MCF 10A (cell line): ENCODE measurements at regions of chr1 and their contacts with region 1.

Region 1: DNA sequence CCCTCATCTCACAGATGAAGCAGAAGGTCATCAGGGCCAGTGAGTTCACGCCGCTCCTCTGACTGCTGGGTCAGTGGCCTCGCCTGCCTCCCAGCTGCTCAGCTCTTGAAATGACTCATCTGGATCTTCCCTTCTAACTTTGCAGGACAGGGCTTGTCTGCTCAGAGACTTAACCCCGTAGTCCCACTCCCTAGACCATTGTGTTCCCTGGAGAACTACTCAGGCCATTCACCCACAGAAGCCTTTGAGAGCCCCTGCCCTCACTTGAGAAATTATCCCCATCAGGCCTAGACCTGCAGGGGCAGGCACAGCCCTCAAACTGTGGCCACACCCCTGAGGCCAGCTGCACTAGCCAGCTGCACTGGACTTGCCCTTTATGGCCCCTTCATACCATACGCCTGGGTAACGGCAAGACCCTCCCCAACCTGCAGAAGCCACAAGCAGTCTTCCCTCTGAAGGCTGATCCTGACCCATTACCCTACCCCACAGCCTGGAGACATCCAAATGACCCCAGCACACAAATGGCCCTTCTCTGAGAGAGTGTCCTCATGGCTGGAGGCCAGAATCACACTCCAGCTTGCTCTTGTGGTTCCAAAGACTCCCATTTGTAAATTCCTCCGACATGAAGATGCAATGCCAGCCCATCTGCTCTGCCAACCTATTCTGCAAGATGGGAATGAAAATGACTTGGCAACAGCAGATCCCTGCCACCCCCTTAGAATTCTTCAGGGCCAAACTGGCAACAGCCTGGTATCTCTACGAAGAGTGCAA is 33.2 kb downstream of the RCSD1 start:
- DNase-seq: peak; percentile 99
- H3K4me3 Mint-ChIP-seq: peak overlapping the region; percentile 51
- H3K27ac Mint-ChIP-seq: peak overlapping the region; percentile 71
- H3K4me1 Mint-ChIP-seq: peaks cover 71% of the 10 kb centered on the region
- H3K27me3 Mint-ChIP-seq: no peaks in the 10 kb centered on the region
- CTCF ChIP-seq: no peak

Region 2: GRCh38 chr1:167563579-167564246 is 99.5 kb before region 1 on chr1:
- CTCF ChIA-PET with region 1: interaction called, 5 read pairs
- POLR2A ChIA-PET with region 1: interaction called, 16 read pairs
- intact Hi-C with region 1: no loop called
- DNase-seq: peak; percentile 79
- H3K4me3 Mint-ChIP-seq: peak overlapping the region; percentile 64
- H3K27ac Mint-ChIP-seq: peak overlapping the region; percentile 85
- H3K4me1 Mint-ChIP-seq: peaks cover 46% of the 10 kb centered on the region
- H3K27me3 Mint-ChIP-seq: no peaks in the 10 kb centered on the region
- CTCF ChIP-seq: no peak

Region 3: DNA sequence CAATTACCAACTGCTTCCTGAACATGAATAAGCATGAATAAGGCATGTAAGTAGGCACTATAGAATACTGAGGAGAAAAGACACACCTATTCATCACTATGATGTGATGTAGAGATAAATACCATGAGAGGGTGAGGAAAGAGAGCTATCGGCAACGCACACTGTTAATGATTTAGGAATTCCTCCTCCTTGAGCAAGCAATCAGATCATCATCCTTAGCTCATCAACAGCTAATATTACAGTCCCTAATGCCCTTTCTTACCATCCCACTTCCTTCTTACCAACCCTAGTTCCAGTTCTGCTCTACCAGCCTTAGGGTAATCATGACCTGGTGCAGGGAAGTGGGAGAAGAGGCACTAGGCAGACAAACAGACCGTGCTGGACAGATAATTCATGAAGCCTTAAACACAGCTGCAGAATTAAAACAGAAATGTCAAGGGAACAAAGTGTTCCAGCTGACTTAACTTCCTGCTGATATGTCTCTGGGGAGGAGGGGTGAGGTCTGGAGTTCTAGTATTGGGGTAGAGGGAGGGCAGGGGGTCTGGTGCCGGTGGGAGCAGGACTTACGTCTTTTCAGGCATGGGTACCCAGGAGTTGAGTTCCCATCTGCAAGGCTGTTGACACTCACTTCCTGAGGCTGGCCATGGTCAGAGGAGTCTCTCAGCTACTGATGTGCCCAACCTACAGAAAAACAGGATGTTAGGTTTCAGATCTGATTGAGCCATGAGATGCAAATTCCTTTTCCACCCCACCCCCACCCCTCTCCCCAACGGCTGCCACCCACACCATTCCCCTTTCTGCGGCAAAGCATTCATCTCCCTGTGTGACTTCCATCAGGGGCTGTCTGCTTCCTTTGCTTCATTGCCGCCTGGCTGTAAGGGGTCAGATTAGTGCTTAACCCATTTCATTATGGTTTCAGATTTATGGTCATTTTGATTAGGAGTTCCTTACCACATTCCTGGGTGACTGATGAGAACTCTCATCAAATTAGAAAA is 45.7 kb before region 1 on chr1:
- CTCF ChIA-PET with region 1: interaction called, 5 read pairs
- POLR2A ChIA-PET with region 1: interaction called, 11 read pairs
- intact Hi-C with region 1: loop called (anchors 2 kb)
- DNase-seq: no peak
- H3K4me3 Mint-ChIP-seq: peak overlapping the region; percentile 0
- H3K27ac Mint-ChIP-seq: peak overlapping the region; percentile 16
- H3K4me1 Mint-ChIP-seq: peaks cover 32% of the 10 kb centered on the region
- H3K27me3 Mint-ChIP-seq: no peaks in the 10 kb centered on the region
- CTCF ChIP-seq: no peak

Region 4: GRCh38 chr1:167676205-167676915 is 13.2 kb after region 1 on chr1:
- CTCF ChIA-PET with region 1: interaction called, 6 read pairs
- POLR2A ChIA-PET with region 1: interaction called, 52 read pairs
- intact Hi-C with region 1: no loop called
- DNase-seq: no peak
- H3K4me3 Mint-ChIP-seq: no peak overlapping the region
- H3K27ac Mint-ChIP-seq: no peak overlapping the region
- H3K4me1 Mint-ChIP-seq: peaks cover 12% of the 10 kb centered on the region
- H3K27me3 Mint-ChIP-seq: no peaks in the 10 kb centered on the region
- CTCF ChIP-seq: no peak

Region 5: GRCh38 chr1:167797015-167797414 is 133.8 kb after region 1 on chr1:
- CTCF ChIA-PET with region 1: no interaction called
- POLR2A ChIA-PET with region 1: interaction called, 17 read pairs
- intact Hi-C with region 1: no loop called
- DNase-seq: peak; percentile 100
- H3K4me3 Mint-ChIP-seq: peak overlapping the region; percentile 57
- H3K27ac Mint-ChIP-seq: peak overlapping the region; percentile 83
- H3K4me1 Mint-ChIP-seq: peaks cover 63% of the 10 kb centered on the region
- H3K27me3 Mint-ChIP-seq: no peaks in the 10 kb centered on the region
- CTCF ChIP-seq: peak; percentile 12